Endothelial cell of umbilical vein (primary cell): ENCODE measurements at regions of chrX and their contacts with region 1.

Region 1: DNA sequence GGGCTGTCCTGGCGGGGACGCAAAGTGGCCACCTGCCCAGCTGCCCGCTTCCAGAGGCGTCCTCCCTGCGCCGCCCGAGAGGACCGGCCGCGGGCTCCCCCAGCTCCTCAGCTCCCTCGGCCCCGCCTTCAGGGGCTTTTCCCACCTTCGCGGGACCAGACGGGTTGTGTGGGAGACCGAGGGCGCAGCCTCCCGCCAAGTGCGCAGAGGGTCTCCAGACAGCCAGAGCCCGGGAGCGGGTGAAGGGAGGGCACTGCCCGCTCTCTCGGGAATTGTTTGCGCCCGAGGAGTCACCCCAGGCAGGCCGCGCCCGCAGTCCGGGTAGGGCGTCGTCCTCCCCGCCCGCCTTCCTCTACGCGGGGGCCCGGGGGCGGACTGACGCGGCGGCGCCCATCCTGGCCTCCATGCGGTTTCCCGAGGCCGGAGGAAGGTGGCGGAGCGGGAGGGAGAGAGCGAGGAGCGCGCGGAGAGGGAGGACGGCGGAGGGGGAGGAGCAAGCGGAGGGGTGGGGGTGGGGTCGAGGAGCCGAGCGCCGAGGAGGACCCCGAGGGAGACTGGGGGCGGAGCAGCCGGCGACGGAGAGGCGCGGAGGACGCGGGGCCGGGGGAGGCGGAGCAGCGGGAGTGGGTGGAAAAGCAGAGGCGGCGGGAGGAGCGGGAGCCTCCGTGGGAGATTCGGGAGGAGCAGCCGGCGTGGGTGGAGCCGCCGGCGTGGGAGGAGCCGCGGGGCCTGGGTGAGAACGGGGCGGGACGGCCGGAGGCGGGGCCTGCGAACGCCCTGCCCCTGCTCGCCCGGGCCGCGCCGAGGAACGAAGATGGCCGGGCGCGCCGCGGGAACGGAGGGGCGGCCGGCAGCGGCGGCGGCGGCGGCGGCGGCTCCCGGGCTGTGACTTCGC is 47.6 kb downstream of the CLDN34 start:
- DNase-seq: peak; percentile 87
- H3K4me3 ChIP-seq: peak overlapping the region in 2 of 3 experiments; percentile 31 to 83
- H3K27ac ChIP-seq: peak overlapping the region; percentile 88
- H3K4me1 ChIP-seq: peaks cover 51% of the 10 kb centered on the region
- H3K27me3 ChIP-seq: no peaks in the 10 kb centered on the region
- CTCF ChIP-seq: no peak
- POLR2A ChIP-seq: no peak

Region 2: DNA sequence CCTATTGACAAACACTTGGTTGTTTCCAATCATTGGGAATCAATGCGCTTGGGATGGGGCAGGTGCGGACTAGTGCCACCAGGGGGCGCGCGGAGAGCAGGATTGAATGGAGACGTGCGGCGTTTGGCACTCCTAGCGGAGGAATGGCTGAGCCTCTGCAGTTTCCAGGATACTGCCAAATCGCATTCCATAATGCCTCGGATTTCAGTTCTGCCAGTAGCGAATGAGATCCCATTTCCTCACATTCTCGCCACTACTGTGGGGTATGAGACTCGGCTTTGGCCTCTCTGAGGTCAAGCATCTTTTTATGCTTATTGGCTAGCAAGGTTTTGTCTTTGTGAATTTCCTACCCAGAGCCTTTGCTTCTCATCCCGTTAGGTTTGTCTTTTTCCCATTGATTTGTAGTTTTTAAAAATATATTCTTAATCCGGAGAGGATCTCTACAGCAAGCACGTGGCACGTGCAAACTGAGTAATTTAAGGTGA is 18.8 kb before region 1 on chrX:
- CTCF ChIA-PET with region 1: no interaction called
- POLR2A ChIA-PET with region 1: interaction called, 9 read pairs
- dilution Hi-C with region 1: no loop called
- intact Hi-C with region 1: loop called (anchors 1 kb)
- DNase-seq: peak; percentile 73
- H3K4me3 ChIP-seq: no peak overlapping the region
- H3K27ac ChIP-seq: no peak overlapping the region
- H3K4me1 ChIP-seq: no peaks in the 10 kb centered on the region
- H3K27me3 ChIP-seq: no peaks in the 10 kb centered on the region
- CTCF ChIP-seq: peak; percentile 75 to 88
- POLR2A ChIP-seq: no peak

Region 3: GRCh38 chrX:10001496-10001895 is 13.2 kb before region 1 on chrX:
- CTCF ChIA-PET with region 1: no interaction called
- POLR2A ChIA-PET with region 1: interaction called, 9 read pairs
- dilution Hi-C with region 1: no loop called
- intact Hi-C with region 1: loop called (anchors 1 kb)
- DNase-seq: peak; percentile 68
- H3K4me3 ChIP-seq: no peak overlapping the region
- H3K27ac ChIP-seq: peak overlapping the region; percentile 63
- H3K4me1 ChIP-seq: peaks cover 25% of the 10 kb centered on the region
- H3K27me3 ChIP-seq: no peaks in the 10 kb centered on the region
- CTCF ChIP-seq: no peak
- POLR2A ChIP-seq: no peak

Region 4: DNA sequence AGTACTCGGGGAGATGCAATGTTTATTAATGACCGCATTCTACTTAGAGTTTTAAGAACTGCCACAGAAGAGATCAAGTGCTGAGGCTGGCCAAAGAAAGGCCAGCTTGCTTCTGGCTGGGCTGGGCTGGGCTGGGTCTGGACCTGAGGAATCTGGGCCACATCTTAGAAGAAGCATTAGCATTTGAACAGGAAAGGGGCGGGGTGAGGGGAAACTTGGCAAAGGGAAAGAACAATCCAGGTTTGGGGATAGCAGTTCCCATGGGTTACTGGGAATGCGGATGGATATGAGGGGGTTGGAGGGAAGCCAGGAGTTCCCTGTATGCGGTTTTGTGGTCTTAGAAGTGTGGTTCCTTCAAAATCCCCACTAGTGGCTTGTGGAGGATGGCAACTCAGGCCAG is 35.8 kb after region 1 on chrX:
- CTCF ChIA-PET with region 1: no interaction called
- POLR2A ChIA-PET with region 1: no interaction called
- dilution Hi-C with region 1: no loop called
- intact Hi-C with region 1: loop called (anchors 1 kb)
- DNase-seq: peak; percentile 23
- H3K4me3 ChIP-seq: no peak overlapping the region
- H3K27ac ChIP-seq: no peak overlapping the region
- H3K4me1 ChIP-seq: peaks cover 66% of the 10 kb centered on the region
- H3K27me3 ChIP-seq: no peaks in the 10 kb centered on the region
- CTCF ChIP-seq: no peak
- POLR2A ChIP-seq: no peak

Region 5: GRCh38 chrX:10156199-10157031 is 141.7 kb after region 1 on chrX and contains the start of gene CLCN4:
- CTCF ChIA-PET with region 1: no interaction called
- POLR2A ChIA-PET with region 1: no interaction called
- dilution Hi-C with region 1: no loop called
- intact Hi-C with region 1: loop called (anchors 5 kb)
- DNase-seq: peak; percentile 46
- H3K4me3 ChIP-seq: peak within 1 kb of the TSS; percentile 38 to 91 (median 43)
- H3K27ac ChIP-seq: peak within 1 kb of the TSS; percentile 95
- H3K4me1 ChIP-seq: peaks cover 9% of the 10 kb centered on the region
- H3K27me3 ChIP-seq: no peaks in the 10 kb centered on the region
- CTCF ChIP-seq: no peak
- POLR2A ChIP-seq: peak; percentile 30
- total RNA-seq, gene CLCN4: 17.0 and 19.8 TPM in 2 replicates